ENCODE measurements at regions of chr19 and their contacts with region 1.

Region 1: GRCh38 chr19:46030812-46031550 is 8.1 kb upstream of the PGLYRP1 start:
- DNase-seq: no peak
- H3K4me3 ChIP-seq: no peak overlapping the region
- H3K27ac ChIP-seq: no peak overlapping the region
- H3K27me3 ChIP-seq: peaks cover 38% of the 10 kb centered on the region
- CTCF ChIP-seq: no peak

Region 2: DNA sequence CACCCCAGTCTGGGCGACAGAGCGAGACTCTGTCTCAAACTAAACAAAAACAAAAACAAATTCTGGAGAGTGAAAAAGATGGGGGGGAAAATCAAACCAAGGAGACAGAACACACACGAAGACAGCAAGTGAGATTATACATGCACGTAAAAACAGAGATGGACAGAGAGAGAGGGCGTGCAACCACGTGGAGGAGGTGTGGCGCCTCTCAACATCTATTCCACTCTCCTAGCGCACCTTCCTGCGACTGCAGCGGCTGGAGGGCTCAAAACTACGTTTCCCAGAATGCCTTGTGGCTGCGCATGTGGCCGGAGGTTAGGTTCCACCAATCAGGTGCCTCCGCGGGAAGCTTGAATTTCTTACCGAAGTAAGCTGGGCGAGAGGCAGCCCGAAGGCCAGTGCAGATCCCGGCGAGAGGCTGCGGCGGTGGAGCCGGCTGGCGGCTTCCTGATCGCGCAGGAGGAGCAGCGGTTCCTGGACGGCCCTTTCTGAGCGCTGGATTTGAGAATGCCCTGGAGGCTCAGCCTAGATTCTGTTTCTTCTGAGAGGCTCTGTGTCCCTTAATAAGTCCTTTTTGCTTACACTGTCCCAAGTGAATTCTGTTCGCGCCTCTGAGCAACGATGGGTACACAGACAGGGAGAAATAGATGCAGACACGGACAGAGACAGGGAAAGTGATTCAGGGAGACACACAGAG is 103.3 kb before region 1 on chr19:
- CTCF ChIA-PET with region 1: no interaction called
- POLR2A ChIA-PET with region 1: no interaction called
- DNase-seq: peak; percentile 60
- H3K4me3 ChIP-seq: no peak overlapping the region; the same call in 1 of the 2 replicates
- H3K27ac ChIP-seq: no peak overlapping the region
- H3K27me3 ChIP-seq: peaks cover 8% of the 10 kb centered on the region
- CTCF ChIP-seq: no peak

Region 3: GRCh38 chr19:46016426-46017094 is 14.4 kb before region 1 on chr19:
- CTCF ChIA-PET with region 1: interaction called, 52 read pairs
- POLR2A ChIA-PET with region 1: no interaction called
- DNase-seq: peak; percentile 20
- H3K4me3 ChIP-seq: peak overlapping the region; percentile 59
- H3K27ac ChIP-seq: no peak overlapping the region
- H3K27me3 ChIP-seq: peaks cover 18% of the 10 kb centered on the region
- CTCF ChIP-seq: peak; percentile 79

Region 4: DNA sequence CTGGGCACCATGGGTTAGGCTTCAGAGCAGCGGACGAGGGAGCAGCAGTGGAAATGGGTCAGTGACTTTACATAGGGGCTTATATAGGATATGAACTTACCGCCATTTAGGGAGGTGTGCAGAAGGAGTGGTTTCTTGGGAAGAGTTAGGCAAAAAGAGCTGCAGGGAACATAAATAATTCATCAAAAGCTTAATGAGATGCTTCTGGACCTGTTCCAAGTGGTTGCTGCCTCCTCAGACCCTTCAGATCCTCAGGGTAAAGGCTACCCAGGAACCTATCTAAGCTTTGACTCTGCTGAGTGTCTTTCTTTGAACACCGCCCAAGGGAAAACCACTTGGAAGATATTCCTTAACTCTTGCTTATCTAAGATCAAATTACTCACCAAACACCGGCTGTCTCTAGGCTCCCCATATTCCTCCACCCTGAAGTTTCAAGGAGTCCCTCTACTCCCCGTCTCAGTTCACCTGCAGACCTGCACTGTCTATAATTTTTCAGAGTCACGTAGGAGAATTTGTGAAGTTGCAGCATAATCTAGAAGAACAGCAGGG is 10.0 kb after region 1 on chr19 and contains the start of gene IGFL4:
- CTCF ChIA-PET with region 1: interaction called, 20 read pairs
- POLR2A ChIA-PET with region 1: no interaction called
- DNase-seq: no peak
- H3K4me3 ChIP-seq: no peak within 1 kb of the TSS
- H3K27ac ChIP-seq: no peak within 1 kb of the TSS
- H3K27me3 ChIP-seq: peaks cover 52% of the 10 kb centered on the region
- CTCF ChIP-seq: no peak
- polyA plus RNA-seq, gene IGFL4: not detected in 2 replicates

Region 5: DNA sequence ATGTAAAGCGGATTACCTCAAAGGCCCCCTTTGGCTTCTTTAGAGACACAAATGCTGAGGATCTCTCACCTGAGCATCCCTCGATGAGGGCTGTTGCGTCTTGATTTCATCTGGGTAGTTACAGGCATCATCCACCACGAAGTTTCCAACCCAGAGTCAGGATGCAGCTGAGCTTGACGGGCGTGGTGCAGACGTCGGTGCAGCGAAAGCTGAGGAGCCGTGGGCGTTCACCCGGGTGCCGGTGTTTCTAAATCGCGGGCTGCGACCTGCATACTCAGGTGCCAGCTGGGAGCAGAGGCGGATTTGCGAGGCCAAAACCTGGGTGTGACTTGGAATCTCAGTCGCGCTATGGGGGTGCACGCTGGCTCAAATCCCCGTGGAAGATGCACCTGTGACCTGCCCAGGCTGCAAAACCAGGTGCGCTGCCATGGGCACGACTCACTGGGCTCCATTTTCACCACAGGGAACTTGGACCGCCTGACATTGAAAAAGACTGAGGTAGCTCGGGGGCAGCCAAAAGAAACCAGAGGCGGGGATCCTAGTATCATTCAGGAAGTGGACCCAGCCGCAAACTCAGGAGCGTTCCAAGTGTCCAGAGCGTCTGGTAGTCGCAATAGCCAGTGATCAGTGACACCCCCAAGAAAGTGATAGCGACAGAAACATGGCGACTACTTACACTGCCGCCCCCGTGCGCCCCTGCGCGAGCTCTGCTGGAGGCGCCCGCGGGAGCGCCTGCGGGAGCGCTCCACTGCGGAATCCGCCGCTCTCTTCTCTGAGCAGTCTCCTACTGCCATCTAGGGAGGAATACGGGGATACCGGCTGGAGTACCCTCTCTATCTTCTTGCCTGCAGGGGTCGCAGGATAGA is 46.2 kb after region 1 on chr19:
- CTCF ChIA-PET with region 1: interaction called, 196 read pairs
- POLR2A ChIA-PET with region 1: no interaction called
- DNase-seq: peak; percentile 56
- H3K4me3 ChIP-seq: peak overlapping the region; percentile 44
- H3K27ac ChIP-seq: no peak overlapping the region
- H3K27me3 ChIP-seq: peaks cover 53% of the 10 kb centered on the region
- CTCF ChIP-seq: peak; percentile 100

Region 6: GRCh38 chr19:46265217-46265828 is 234.3 kb after region 1 on chr19:
- CTCF ChIA-PET with region 1: interaction called, 54 read pairs
- POLR2A ChIA-PET with region 1: no interaction called
- DNase-seq: peak; percentile 57
- H3K4me3 ChIP-seq: no peak overlapping the region
- H3K27ac ChIP-seq: no peak overlapping the region
- H3K27me3 ChIP-seq: peaks cover 35% of the 10 kb centered on the region
- CTCF ChIP-seq: peak; percentile 78

Region 7: DNA sequence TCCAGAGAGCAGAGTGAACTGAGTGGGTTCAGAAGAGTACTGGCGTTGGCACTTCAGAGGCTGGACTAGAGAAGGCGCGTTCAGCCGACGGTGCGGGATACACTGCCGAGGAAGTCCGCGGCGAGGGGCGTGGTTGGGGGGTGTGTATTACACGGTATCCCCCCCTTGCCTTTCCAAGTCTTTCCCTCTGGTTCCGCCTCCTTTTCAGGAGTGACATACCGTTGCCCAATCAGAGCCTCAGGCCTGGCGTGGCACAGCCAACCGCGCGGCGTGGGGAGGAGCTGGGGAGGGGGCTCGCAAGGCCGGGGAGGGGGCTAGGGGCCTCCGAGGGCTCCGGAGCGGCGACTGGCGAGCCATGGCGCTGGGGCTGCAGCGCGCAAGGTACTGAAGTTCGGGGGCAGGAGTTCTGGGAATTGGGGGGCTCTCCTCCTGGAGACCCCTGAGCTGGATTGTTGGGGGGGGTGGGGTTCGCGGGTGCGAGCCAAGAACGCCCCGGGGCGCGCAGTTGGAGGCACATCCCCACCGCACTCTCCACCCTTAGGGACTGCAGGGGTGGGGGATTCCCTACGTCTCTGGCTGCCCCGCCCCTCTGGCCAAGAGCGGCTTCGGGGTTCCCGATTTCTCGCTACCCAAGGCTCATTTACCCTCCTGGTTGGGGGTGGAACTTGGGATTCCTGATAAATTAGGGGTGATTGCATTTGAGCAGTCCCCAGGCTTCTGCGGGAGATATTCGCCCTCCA is 265.9 kb after region 1 on chr19 and contains the start of gene HIF3A:
- CTCF ChIA-PET with region 1: interaction called, 12 read pairs
- POLR2A ChIA-PET with region 1: no interaction called
- DNase-seq: no peak
- H3K4me3 ChIP-seq: peak within 1 kb of the TSS; percentile 45
- H3K27ac ChIP-seq: no peak within 1 kb of the TSS
- H3K27me3 ChIP-seq: peaks cover 17% of the 10 kb centered on the region
- CTCF ChIP-seq: no peak
- polyA plus RNA-seq, gene HIF3A: 0.21 and 0.47 TPM in 2 replicates